Activated naive CD4-positive, alpha-beta T cell treated with anti-CD3 and anti-CD28 coated beads, Interleukin-2, amount 10 ng/mL, durations not matched to agents 7 days and 5 days (primary cell): ENCODE measurements at regions of chr9 and their contacts with region 1.

Region 1: GRCh38 chr9:37575921-37576721 is at the start of gene FBXO10:
- DNase-seq: peak; percentile 71
- H3K4me3 Mint-ChIP-seq: peak within 1 kb of the TSS; percentile 83
- H3K27ac Mint-ChIP-seq: peak within 1 kb of the TSS; percentile 77
- H3K4me1 Mint-ChIP-seq: peaks cover 18% of the 10 kb centered on the region
- H3K27me3 Mint-ChIP-seq: peaks cover 6% of the 10 kb centered on the region

Region 2: DNA sequence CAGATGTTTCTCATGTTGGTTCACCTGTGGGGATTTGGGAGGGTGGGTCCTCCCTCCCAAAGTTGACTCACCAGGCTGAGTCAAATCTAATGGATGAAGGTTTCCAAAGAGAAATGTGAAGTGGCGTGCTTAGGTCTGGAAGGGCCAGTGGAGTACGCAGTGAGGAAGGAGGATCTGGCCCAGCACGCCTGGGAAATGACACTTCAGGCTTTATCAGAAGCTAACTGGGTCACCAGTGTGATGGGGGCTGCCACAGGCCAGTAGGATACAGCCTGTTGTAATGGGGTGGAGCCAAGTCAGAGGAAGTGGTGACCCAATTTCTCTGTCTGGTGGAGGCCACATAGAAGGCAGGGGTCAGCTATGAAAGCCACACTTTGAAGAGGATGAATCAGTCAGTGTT is 72.4 kb before region 1 on chr9:
- CTCF ChIA-PET with region 1: no interaction called
- DNase-seq: no peak
- H3K4me3 Mint-ChIP-seq: no peak overlapping the region
- H3K27ac Mint-ChIP-seq: peak overlapping the region; percentile 71
- H3K4me1 Mint-ChIP-seq: peaks cover 13% of the 10 kb centered on the region
- H3K27me3 Mint-ChIP-seq: no peaks in the 10 kb centered on the region

Region 3: GRCh38 chr9:37592108-37592951 is 16.2 kb after region 1 on chr9 and contains the start of gene TOMM5:
- CTCF ChIA-PET with region 1: interaction called, 36 read pairs
- DNase-seq: peak; percentile 95
- H3K4me3 Mint-ChIP-seq: peak within 1 kb of the TSS; percentile 93
- H3K27ac Mint-ChIP-seq: peak within 1 kb of the TSS; percentile 95
- H3K4me1 Mint-ChIP-seq: peaks cover 42% of the 10 kb centered on the region
- H3K27me3 Mint-ChIP-seq: peaks cover 4% of the 10 kb centered on the region